SK-N-SH (cell line): ENCODE measurements at regions of chr12 and their contacts with region 1.

Region 1: GRCh38 chr12:25213338-25213737 is 18.3 kb downstream of the ETFRF1 start:
- DNase-seq: no peak
- H3K4me3 ChIP-seq: no peak overlapping the region
- H3K27ac ChIP-seq: no peak overlapping the region
- H3K4me1 ChIP-seq: no peaks in the 10 kb centered on the region; a peak in 1 of 4 replicates
- H3K27me3 ChIP-seq: no peaks in the 10 kb centered on the region
- CTCF ChIP-seq: no peak
- EP300 ChIP-seq: no peak
- RAD21 ChIP-seq: no peak

Region 2: GRCh38 chr12:25236190-25236589 is 22.9 kb after region 1 on chr12:
- CTCF ChIA-PET with region 1: interaction called, 11 read pairs
- POLR2A ChIA-PET with region 1: no interaction called
- DNase-seq: no peak
- H3K4me3 ChIP-seq: no peak overlapping the region
- H3K27ac ChIP-seq: no peak overlapping the region
- H3K4me1 ChIP-seq: no peaks in the 10 kb centered on the region; a peak in 2 of 4 replicates
- H3K27me3 ChIP-seq: no peaks in the 10 kb centered on the region
- CTCF ChIP-seq: no peak
- EP300 ChIP-seq: no peak
- RAD21 ChIP-seq: no peak

Region 3: GRCh38 chr12:25241167-25242020 is 28.1 kb after region 1 on chr12:
- CTCF ChIA-PET with region 1: interaction called, 11 read pairs
- POLR2A ChIA-PET with region 1: no interaction called
- DNase-seq: peak; percentile 27
- H3K4me3 ChIP-seq: no peak overlapping the region; a peak in 1 of 4 replicates
- H3K27ac ChIP-seq: no peak overlapping the region; a peak in 1 of 4 replicates
- H3K4me1 ChIP-seq: peaks cover 0 to 3% of the 10 kb centered on the region in 2 experiments; a peak in 1 of 4 replicates
- H3K27me3 ChIP-seq: no peaks in the 10 kb centered on the region
- CTCF ChIP-seq: peak; percentile 87
- EP300 ChIP-seq: no peak
- RAD21 ChIP-seq: peak; percentile 72

Region 4: GRCh38 chr12:25386831-25387731 is 173.7 kb after region 1 on chr12:
- CTCF ChIA-PET with region 1: interaction called, 11 read pairs
- POLR2A ChIA-PET with region 1: no interaction called
- DNase-seq: peak; percentile 74
- H3K4me3 ChIP-seq: peak overlapping the region; percentile 73 to 96
- H3K27ac ChIP-seq: peak overlapping the region; percentile 82 to 100; a peak in 3 of 4 replicates
- H3K4me1 ChIP-seq: peaks cover 0 to 12% of the 10 kb centered on the region in 2 experiments; a peak in 2 of 4 replicates
- H3K27me3 ChIP-seq: no peaks in the 10 kb centered on the region
- CTCF ChIP-seq: peak; percentile 94
- EP300 ChIP-seq: no peak
- RAD21 ChIP-seq: peak; percentile 98